ENCODE measurements at regions of chr4 and their contacts with region 1.

Region 1: DNA sequence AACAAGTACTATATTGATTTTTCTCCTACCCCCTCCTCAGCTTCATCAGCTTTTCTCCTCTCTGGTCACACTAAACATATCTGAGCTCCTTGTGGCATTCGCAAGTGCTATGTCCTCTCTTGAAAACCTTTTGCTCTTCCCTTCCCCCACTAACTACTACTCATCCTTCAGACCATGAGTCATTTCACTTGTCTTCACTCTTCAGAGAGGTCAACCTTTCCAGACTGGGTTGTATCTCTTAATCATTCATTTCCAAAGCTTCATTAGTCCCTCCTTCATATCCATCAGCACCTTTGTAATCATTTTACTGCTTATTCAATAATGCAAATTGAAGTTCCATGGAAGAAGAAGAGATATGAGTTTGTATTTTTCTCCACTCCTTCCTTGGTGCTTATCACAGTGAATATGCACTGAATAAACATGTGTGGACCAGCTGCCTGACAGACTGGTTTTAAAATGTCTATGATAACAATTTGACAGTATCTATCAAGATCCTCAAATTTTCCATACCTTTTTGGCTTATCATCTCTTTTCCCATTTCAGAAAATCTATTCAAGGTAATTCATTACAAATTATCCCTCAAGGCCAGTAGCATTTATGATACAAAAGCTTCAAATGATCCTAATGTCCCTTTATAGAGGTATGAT is 28.4 kb downstream of the DDX60L start:
- DNase-seq: no peak

Region 2: DNA sequence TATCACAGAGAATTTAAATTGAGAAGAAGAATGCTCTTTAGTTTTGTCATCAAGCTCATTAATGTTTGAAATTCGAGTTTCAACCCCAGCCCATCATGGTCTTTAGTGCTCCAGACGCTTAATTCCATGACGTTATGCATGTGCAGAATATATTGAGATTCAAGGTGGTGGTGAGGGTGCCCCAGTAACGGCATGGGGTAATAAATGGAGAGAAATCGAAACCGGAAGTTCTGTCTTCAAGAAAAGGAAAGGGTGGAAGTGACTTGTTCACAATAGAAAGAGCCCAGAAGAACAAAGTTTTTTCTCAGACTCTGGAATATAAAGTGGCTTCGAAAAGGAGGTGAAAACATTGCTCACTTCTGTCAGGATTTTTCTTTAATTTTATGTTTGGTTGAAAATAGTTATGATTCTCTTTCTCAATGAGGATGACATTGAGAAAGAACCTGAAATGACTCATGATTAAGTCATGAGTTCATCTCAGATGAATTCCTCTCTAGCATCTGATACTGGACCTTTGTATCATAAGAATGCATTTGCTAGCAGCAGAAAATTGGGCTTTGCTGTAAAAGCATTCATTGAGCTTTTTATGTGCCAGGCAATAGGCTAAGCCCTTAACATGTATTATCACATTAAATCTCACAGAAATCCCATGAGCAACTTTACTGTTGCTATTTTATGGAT is 29.2 kb after region 1 on chr4:
- CTCF ChIA-PET with region 1: no interaction called
- POLR2A ChIA-PET with region 1: interaction called, 16 read pairs
- DNase-seq: no peak